Gastrocnemius medialis (tissue), 4 donors: ENCODE measurements at regions of chr2 and their contacts with region 1.

Region 1: GRCh38 chr2:32010670-32011484 is at the start of gene MEMO1:
- DNase-seq: peak; percentile 91 to 94
- ATAC-seq: peak; percentile 83 to 85
- H3K4me3 ChIP-seq: peak within 1 kb of the TSS; percentile 89 to 95 (median 90)
- H3K27ac ChIP-seq: peak within 1 kb of the TSS; percentile 86 to 98 (median 94)
- H3K4me1 ChIP-seq: peaks cover 19 to 36% of the 10 kb centered on the region in 2 donors
- H3K27me3 ChIP-seq: no peaks in the 10 kb centered on the region
- CTCF ChIP-seq: peak in 3 of 5 experiments; percentile 9 to 20 (median 19)
- POLR2A ChIP-seq: peak; percentile 55 to 77
- total RNA-seq, gene MEMO1: 32.2 to 75.0 (median 50.0) TPM

Region 2: GRCh38 chr2:31967790-31968189 is 43.1 kb before region 1 on chr2:
- in situ Hi-C with region 1: no loop called
- intact Hi-C with region 1: no loop called
- DNase-seq: no peak
- ATAC-seq: no peak
- H3K4me3 ChIP-seq: no peak overlapping the region
- H3K27ac ChIP-seq: no peak overlapping the region
- H3K4me1 ChIP-seq: peaks cover 3 to 10% of the 10 kb centered on the region in 2 donors
- H3K27me3 ChIP-seq: no peaks in the 10 kb centered on the region
- CTCF ChIP-seq: no peak
- POLR2A ChIP-seq: no peak

Region 3: DNA sequence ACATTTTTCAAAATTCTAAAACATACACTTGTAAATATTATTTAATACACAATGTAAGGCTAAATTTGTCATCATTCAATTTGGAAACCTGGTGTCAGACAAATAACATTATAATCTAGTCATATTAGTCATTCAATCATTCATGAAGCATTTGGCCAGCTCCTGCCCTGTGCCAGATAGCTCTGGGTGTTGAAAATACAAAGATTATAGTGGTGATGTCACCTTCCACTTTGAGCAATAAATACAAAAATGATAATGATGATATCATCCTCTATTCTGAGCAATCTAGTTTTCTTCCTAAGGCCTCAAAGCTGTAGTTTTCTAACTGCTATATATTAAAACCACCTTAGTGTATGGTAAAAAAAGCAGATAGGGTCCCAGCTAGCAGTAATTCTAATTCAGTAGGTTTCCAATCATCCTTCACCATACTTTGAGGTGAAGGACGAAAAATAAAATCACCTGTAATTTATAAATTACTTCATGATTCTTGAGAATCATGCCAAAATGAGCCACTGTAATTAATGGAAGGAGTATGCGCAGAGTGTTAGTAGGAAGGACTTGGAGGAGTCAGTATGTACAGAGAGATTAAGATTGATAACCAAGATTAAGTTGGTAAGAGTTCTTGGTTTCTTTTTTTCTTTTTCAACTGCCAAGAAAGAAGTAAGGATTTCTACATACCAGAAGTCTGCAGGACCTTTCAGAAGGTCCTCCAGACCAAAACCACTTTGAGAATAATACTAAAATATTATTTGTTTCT is 23.2 kb before region 1 on chr2:
- in situ Hi-C with region 1: no loop called
- intact Hi-C with region 1: loop called (anchors 2 kb)
- DNase-seq: no peak
- ATAC-seq: peak; percentile 37 to 53
- H3K4me3 ChIP-seq: no peak overlapping the region
- H3K27ac ChIP-seq: peak overlapping the region; percentile 57 to 81 (median 70)
- H3K4me1 ChIP-seq: peaks cover 30 to 47% of the 10 kb centered on the region in 2 donors
- H3K27me3 ChIP-seq: no peaks in the 10 kb centered on the region
- CTCF ChIP-seq: no peak
- POLR2A ChIP-seq: no peak

Region 4: DNA sequence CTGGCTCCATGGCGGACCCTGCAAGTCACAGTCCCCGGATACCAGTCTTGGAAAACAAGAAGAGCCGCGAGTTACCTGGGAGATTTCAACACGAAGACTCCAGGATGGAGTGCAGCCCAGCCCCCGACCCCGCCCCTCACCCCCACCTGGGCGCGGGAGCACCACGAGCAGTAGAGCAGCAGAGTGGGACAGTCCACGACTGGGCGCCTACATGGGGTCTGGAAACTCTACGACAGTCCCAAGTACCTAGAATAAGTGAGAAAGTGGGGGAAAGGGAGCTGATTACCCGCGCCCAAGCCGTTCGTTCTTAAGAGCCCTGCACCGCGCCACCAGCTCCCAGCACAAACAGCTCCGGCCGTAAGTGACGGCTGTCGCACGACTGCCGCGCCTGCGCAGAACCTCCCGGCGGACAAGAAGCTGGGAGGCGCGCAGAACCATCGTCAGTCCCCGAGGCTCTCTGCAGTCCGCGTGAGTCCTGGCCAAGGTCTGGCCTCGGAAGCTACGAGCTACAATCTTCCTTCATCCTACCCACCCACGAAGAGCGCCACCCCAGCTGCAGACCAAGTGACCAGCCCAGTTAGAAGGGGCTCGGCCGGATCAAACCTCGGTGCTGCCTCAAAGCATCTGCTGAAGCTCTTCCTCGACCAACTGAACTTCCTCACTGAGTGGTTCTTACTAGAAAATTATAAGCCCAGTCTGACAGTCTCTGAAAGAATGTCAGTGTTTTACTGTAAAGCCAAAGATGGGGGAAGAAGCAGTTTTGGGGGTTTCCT is 28.8 kb after region 1 on chr2 and contains the start of gene DPY30:
- in situ Hi-C with region 1: no loop called
- intact Hi-C with region 1: loop called (anchors 2 kb)
- DNase-seq: peak; percentile 84 to 89
- ATAC-seq: peak; percentile 97 to 98
- H3K4me3 ChIP-seq: peak within 1 kb of the TSS; percentile 76 to 99 (median 95)
- H3K27ac ChIP-seq: peak within 1 kb of the TSS; percentile 83 to 92 (median 89)
- H3K4me1 ChIP-seq: peaks cover 9% of the 10 kb centered on the region in 2 donors
- H3K27me3 ChIP-seq: no peaks in the 10 kb centered on the region
- CTCF ChIP-seq: no peak
- POLR2A ChIP-seq: peak; percentile 72 to 75
- total RNA-seq, gene DPY30: 29.3 to 59.8 (median 36.2) TPM

Region 5: DNA sequence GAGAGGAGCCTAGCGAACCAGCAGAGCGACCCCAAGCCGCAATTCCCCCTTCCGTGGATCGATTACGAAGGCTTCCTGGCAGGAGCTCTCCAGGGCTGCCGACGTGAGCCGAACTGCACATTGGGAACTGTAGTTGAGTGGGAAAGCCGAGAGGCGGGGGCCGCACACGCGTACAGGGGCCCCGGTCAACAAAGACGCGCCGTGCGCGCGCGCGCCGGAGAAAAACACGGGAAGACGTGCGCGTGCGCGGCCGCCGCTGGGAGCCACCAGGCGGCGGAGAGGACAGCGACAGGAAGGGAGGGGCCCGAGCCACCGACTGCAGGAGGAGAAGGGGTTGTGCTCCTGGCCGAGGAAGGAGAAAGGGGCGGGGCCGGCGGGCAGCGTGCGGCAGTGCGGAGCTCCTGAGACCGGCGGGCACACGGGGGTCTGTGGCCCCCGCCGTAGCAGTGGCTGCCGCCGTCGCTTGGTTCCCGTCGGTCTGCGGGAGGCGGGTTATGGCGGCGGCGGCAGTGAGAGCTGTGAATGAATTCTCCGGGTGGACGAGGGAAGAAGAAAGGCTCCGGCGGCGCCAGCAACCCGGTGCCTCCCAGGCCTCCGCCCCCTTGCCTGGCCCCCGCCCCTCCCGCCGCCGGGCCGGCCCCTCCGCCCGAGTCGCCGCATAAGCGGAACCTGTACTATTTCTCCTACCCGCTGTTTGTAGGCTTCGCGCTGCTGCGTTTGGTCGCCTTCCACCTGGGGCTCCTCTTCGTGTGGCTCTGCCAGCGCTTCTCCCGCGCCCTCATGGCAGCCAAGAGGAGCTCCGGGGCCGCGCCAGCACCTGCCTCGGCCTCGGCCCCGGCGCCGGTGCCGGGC is 52.7 kb after region 1 on chr2 and contains the start of gene SPAST:
- in situ Hi-C with region 1: loop called in 2 of 4 experiments (anchors 10 kb)
- intact Hi-C with region 1: loop called (anchors 1 kb)
- DNase-seq: peak; percentile 96 to 97
- ATAC-seq: peak; percentile 96
- H3K4me3 ChIP-seq: peak within 1 kb of the TSS; percentile 68 to 97 (median 82)
- H3K27ac ChIP-seq: peak within 1 kb of the TSS; percentile 86 to 97 (median 88)
- H3K4me1 ChIP-seq: peaks cover 18% of the 10 kb centered on the region in 2 donors
- H3K27me3 ChIP-seq: no peaks in the 10 kb centered on the region
- CTCF ChIP-seq: peak; percentile 77 to 79 (median 77)
- POLR2A ChIP-seq: peak; percentile 71 to 88
- total RNA-seq, gene SPAST: 25.0 to 30.6 (median 28.9) TPM